ENCODE measurements at regions of chr17 and their contacts with region 1.

Region 1: DNA sequence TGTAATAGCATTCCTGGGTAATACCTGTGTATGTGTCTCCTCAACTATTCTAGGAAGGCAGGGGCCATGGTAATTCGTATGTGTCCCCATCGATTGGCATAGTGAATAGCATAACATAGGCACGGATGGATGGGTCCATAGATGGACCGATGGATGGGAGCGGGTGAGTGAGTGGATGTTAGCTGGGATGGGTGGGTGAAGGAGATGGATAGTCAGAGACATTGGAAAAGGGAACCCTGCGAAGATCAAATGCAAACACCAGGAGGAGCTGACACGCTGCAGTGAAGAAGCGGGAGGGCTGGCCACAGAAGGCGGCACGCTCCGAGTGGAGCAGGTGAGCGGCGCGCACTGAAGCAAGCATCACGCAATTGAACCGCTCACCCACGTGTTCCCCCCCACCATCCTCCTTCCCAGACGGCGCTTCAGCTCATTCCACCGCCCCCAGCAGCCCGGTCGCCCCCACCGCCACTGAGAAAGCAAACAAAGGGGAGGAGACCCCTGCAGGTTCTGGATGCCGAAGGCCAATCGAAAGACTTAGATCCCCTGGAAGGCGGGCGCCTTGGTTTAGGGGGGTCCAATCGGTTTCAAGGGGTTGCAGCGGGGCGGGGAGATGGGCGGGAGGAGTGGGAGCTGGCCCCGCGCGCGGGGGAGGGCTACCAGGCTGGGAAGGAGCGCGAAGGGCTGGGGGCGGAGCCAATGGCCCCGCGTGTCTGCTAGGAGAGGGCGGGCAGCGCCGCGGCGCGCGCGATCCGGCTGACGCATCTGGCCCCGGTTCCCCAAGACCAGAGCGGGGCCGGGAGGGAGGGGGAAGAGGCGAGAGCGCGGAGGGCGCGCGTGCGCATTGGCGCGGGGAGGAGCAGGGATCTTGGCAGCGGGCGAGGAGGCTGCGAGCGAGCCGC is at the start of gene ARRB2:
- DNase-seq: peak; percentile 91 to 99
- H3K4me3 ChIP-seq: peak within 1 kb of the TSS; percentile 73
- H3K27ac ChIP-seq: peak within 1 kb of the TSS; percentile 56
- H3K4me1 ChIP-seq: peaks cover 17% of the 10 kb centered on the region
- H3K27me3 ChIP-seq: no peaks in the 10 kb centered on the region
- CTCF ChIP-seq: peak; percentile 71
- total RNA-seq, gene ARRB2: 79.7 and 110 TPM in 2 replicates

Region 2: DNA sequence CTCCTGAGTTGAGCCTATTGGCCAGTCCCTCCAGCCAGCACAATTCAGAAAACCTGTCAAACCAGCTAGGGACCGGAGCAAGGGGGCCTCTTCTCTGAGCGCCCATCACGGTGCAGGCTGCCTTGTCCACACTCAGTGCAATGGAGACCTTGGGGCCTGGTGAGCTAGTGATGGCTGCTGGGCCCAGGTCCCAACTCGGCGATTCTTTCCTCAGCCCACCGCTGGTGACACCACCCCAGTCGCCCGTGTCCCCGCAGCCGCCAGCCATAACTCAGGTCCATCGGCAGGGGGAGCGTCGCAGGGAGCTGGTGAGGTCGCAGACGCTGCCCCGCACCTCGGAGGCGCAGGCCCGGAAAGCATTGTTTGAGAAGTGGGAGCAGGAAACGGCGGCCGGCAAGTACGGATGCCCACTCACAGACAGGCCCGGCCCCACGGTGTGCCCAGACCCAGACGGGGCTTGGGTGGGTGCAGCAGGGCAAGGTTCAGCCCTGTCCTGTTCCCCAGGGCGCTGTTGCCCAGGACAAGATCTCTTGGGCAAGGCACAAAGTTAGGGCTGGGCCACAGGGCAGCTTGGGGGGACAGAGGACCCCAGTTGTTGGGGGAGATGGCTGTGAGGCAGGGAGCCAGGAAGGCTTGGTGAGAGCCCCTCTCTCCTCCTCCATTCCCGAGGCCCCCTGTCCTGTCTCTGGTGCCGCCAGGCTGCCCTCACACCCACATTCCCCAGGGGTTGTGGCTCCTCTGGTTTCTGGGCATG is 114.9 kb before region 1 on chr17:
- CTCF ChIA-PET with region 1: no interaction called
- POLR2A ChIA-PET with region 1: no interaction called
- intact Hi-C with region 1: no loop called
- DNase-seq: no peak
- H3K4me3 ChIP-seq: no peak overlapping the region
- H3K27ac ChIP-seq: no peak overlapping the region
- H3K4me1 ChIP-seq: peaks cover 10% of the 10 kb centered on the region
- H3K27me3 ChIP-seq: peaks cover 59% of the 10 kb centered on the region
- CTCF ChIP-seq: no peak

Region 3: GRCh38 chr17:4631836-4632580 is 78.0 kb before region 1 on chr17:
- CTCF ChIA-PET with region 1: no interaction called
- POLR2A ChIA-PET with region 1: no interaction called
- intact Hi-C with region 1: no loop called
- DNase-seq: no peak
- H3K4me3 ChIP-seq: no peak overlapping the region
- H3K27ac ChIP-seq: no peak overlapping the region
- H3K4me1 ChIP-seq: no peaks in the 10 kb centered on the region
- H3K27me3 ChIP-seq: peaks cover 5% of the 10 kb centered on the region; the same call in 1 of the 2 replicates
- CTCF ChIP-seq: no peak

Region 4: DNA sequence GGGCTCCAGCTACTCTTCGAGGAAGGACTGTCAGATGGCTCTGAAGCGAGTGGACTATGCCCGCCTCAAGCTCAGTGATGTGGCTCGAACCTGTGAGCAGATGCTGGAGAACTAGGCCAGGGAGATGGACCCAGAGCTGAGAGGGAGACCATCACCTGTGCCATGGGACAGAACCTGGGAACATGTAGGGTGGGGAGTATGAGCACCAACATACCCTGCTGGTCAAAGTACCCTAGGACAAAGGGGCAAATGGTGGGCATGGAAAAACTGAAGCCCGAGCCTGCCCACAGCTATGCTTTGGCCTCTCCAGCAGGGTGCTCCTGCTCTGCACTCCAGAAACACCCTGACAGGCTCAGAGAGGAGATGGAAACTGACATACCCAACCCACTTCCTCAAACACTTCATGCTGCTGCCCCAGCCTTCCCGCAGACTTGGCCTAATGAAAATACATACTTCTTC is 23.1 kb after region 1 on chr17:
- CTCF ChIA-PET with region 1: interaction called, 5 read pairs
- POLR2A ChIA-PET with region 1: interaction called, 3 read pairs
- intact Hi-C with region 1: loop called (anchors 1 kb)
- DNase-seq: no peak
- H3K4me3 ChIP-seq: no peak overlapping the region
- H3K27ac ChIP-seq: no peak overlapping the region
- H3K4me1 ChIP-seq: peaks cover 10% of the 10 kb centered on the region; the same call in 1 of the 2 replicates
- H3K27me3 ChIP-seq: no peaks in the 10 kb centered on the region
- CTCF ChIP-seq: no peak

Region 5: DNA sequence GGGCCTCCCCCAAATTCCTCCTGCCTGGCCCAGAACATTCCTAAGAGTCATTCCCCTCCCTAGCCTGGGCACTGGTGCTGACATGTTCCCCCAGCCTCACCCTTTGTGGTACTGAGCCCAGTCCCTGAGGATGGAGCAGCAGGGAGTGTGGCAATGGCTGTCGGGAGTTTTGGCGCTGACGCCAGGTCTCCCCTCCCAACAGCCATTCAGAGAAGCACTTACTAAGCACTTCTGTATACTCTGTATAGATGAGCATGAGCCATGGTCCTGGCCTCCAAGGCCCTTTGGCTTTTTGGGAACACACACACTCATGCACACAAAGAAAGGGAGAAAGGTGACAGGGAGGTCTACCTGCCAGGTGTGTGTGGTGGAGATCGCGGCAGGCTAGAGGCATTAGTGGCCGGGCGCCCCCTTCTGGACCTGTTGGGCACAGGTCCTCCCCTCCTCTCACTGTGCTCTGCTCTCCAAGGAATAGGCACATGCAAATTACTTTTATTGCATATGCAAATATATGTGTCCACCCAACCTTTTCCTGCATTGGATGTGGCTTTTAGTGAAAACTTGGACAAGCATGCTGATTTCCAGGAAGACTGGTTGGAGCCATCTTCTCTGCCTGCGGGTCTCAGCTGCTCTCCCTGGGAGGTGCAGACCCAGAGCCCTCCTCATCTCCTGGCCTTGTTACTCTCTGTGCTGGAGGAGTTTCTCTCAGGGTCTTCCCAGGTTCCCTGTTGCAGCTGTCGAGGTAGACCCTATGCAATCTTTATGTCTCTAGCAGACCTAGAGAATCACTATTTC is 171.9 kb after region 1 on chr17:
- CTCF ChIA-PET with region 1: no interaction called
- POLR2A ChIA-PET with region 1: interaction called, 5 read pairs
- intact Hi-C with region 1: loop called (anchors 1 kb)
- DNase-seq: peak; percentile 60 to 76
- H3K4me3 ChIP-seq: no peak overlapping the region
- H3K27ac ChIP-seq: no peak overlapping the region
- H3K4me1 ChIP-seq: no peaks in the 10 kb centered on the region
- H3K27me3 ChIP-seq: no peaks in the 10 kb centered on the region
- CTCF ChIP-seq: peak; percentile 92

Region 6: DNA sequence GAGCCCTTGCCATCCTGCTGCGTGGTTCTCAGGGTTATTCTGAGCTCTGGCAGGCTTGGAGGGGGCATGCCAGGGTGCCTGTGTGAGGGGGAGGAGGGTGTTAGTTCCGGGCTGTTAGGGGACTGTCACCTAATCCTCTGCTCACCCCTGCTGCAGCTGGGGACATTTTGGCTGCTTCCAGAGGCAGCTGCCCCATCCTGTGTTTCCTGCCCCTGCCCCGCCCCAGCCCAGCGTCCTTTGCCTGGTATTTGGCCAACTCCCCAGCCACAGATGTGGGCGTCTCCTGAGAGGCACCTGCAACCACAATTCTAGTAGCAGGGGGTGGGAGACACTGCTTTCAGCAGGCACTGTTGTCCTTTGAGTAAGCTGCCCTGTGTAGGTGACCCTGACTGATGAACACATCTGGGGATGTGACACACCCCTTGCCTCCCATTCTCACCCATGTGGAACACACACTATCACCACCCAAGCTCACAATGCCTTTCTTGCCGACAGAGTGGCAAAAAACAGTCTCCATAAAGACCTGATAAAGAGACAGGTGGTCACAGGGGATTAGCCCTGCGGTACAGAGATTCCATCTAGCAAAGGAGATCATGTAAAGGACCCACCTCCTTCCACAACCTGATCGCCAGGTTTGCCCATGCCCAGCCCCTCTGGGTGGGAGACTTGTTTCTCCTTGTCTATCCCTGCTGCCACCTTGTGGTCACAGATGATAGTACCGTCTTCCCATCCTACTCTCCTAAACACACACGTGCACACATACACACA is 193.2 kb after region 1 on chr17 and contains the start of gene CHRNE:
- CTCF ChIA-PET with region 1: interaction called, 3 read pairs
- POLR2A ChIA-PET with region 1: no interaction called
- intact Hi-C with region 1: loop called (anchors 1 kb)
- DNase-seq: peak; percentile 62 to 83
- H3K4me3 ChIP-seq: no peak within 1 kb of the TSS
- H3K27ac ChIP-seq: 0 out of 2 replicates have a peak within 1 kb of the TSS, but pooled peaks have one; percentile 7
- H3K4me1 ChIP-seq: peaks cover 13% of the 10 kb centered on the region
- H3K27me3 ChIP-seq: no peaks in the 10 kb centered on the region
- CTCF ChIP-seq: peak; percentile 94
- total RNA-seq, gene CHRNE: 0.23 and 0.24 TPM in 2 replicates

Measured in PC-9 (cell line).